AG04449 (cell line): ENCODE measurements at regions of chr3 and their contacts with region 1.

Region 1: DNA sequence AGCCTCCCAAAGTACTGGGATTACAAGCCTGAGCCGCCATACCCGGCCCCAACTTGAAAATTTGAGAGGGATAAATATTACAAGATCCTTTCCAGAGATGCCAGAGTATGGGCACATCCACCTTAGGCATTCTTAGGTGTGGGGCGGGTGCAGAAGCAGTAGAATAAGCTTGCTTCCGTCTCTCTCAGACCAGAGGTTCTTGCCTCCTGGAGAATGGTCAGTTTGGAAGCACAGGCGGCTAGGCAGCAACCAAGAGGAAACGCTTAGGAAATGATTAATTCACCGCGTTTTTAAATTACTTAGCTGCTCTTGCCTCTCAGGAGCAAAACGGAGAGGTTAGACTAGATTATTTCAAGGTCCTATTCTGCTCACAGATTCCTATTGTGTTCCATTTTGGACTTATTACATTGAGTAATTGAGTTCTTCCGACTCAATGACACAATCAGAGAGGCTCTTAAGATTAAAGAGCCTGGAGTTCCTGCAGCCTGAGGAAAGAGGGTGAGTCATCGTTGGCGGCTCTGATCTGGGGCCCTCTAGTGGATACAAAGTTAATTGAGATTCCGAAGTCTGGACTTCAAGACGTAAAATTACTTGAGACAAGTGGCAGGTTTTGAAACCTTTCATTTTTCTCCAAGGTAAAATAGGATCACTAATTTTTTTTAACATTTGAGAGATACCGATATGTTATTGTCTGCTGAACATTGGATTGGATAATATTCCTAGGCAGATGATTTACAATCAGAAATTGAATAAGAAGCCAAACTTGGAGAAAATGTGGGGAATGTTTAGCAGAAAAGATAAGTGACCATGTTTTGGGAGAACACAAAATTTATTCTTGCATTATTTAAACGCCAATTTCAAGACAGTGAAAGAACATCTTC is 5.8 kb upstream of the TOPAZ1 start:
- DNase-seq: peak; percentile 63
- H3K4me3 ChIP-seq: no peak overlapping the region
- CTCF ChIP-seq: peak; percentile 60

Region 2: DNA sequence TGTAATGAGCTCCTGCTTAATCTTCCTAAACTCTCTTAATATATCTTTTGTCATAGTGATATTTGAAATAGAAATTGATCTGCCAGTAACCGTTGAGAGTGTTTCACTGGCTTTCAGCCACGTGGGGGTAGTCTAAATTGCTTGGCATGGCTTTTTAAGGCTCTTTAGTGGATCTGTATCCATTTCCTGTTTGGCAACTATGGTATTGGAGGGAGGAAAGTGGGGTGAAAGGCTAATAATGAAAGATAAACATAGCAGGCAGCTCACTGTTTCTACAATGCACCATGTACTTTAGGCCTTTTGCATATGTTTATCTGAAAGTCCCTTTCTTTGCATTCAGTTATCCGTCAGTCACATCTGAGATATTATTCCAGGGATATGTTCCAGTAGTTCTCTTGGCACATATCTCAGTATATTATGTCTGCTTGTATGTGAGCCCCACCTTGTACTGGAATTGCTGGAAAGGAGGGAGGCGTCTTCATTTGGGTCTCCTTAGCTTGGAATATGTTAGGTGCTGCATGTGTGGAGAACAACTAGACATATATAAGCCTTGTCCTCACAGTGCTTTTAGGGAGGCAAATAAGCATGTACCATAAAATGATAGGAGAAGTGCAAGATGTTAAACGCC is 16.6 kb after region 1 on chr3:
- CTCF ChIA-PET with region 1: interaction called, 11 read pairs
- POLR2A ChIA-PET with region 1: no interaction called
- DNase-seq: no peak
- H3K4me3 ChIP-seq: no peak overlapping the region
- CTCF ChIP-seq: no peak